Esophagus muscularis mucosa (tissue), 4 donors: ENCODE measurements at regions of chr16 and their contacts with region 1.

Region 1: GRCh38 chr16:68264128-68265077 is at the start of gene SLC7A6:
- DNase-seq: peak; percentile 93
- H3K4me3 ChIP-seq: peak within 1 kb of the TSS; percentile 82 to 96 (median 88)
- H3K27ac ChIP-seq: peak within 1 kb of the TSS; percentile 97 to 99 (median 98)
- H3K4me1 ChIP-seq: peaks cover 32 to 60% (median 51%) of the 10 kb centered on the region in 4 donors
- H3K27me3 ChIP-seq: no peaks in the 10 kb centered on the region
- CTCF ChIP-seq: peak; percentile 60 to 67 (median 61)
- EP300 ChIP-seq: no peak
- POLR2A ChIP-seq: peak; percentile 80
- total RNA-seq, gene SLC7A6: 18.9 to 37.1 (median 27.3) TPM

Region 2: GRCh38 chr16:68229431-68230198 is 34.8 kb before region 1 on chr16:
- intact Hi-C with region 1: no loop called
- DNase-seq: no peak
- H3K4me3 ChIP-seq: no peak overlapping the region
- H3K27ac ChIP-seq: no peak overlapping the region
- H3K4me1 ChIP-seq: peaks cover 8 to 26% (median 13%) of the 10 kb centered on the region in 4 donors
- H3K27me3 ChIP-seq: no peaks in the 10 kb centered on the region
- CTCF ChIP-seq: peak; percentile 89 to 91 (median 89)
- EP300 ChIP-seq: no peak
- POLR2A ChIP-seq: no peak

Region 3: GRCh38 chr16:68310761-68311511 is 46.5 kb after region 1 on chr16 and contains the starts of genes PRMT7 and SLC7A6OS:
- intact Hi-C with region 1: loop called (anchors 5 kb)
- DNase-seq: peak; percentile 95
- H3K4me3 ChIP-seq: peak within 1 kb of the TSS; percentile 71 to 92 (median 86)
- H3K27ac ChIP-seq: peak within 1 kb of the TSS; percentile 77 to 84 (median 82)
- H3K4me1 ChIP-seq: peaks cover 23 to 46% (median 41%) of the 10 kb centered on the region in 4 donors
- H3K27me3 ChIP-seq: no peaks in the 10 kb centered on the region
- CTCF ChIP-seq: peak in 2 of 3 experiments; percentile 55 to 66
- EP300 ChIP-seq: no peak
- POLR2A ChIP-seq: peak; percentile 61
- total RNA-seq, gene PRMT7: 20.0 to 31.1 (median 26.8) TPM
- total RNA-seq, gene SLC7A6OS: 8.7 to 15.7 (median 11.5) TPM

Region 4: GRCh38 chr16:68328151-68328859 is 63.9 kb after region 1 on chr16:
- intact Hi-C with region 1: loop called (anchors 1 kb)
- DNase-seq: peak; percentile 95
- H3K4me3 ChIP-seq: no peak overlapping the region
- H3K27ac ChIP-seq: no peak overlapping the region
- H3K4me1 ChIP-seq: peaks cover 10 to 17% (median 15%) of the 10 kb centered on the region in 4 donors
- H3K27me3 ChIP-seq: no peaks in the 10 kb centered on the region
- CTCF ChIP-seq: peak; percentile 89 to 98 (median 96)
- EP300 ChIP-seq: no peak
- POLR2A ChIP-seq: no peak